OCI-LY7 (cell line): ENCODE measurements at regions of chr7 and their contacts with region 1.

Region 1: DNA sequence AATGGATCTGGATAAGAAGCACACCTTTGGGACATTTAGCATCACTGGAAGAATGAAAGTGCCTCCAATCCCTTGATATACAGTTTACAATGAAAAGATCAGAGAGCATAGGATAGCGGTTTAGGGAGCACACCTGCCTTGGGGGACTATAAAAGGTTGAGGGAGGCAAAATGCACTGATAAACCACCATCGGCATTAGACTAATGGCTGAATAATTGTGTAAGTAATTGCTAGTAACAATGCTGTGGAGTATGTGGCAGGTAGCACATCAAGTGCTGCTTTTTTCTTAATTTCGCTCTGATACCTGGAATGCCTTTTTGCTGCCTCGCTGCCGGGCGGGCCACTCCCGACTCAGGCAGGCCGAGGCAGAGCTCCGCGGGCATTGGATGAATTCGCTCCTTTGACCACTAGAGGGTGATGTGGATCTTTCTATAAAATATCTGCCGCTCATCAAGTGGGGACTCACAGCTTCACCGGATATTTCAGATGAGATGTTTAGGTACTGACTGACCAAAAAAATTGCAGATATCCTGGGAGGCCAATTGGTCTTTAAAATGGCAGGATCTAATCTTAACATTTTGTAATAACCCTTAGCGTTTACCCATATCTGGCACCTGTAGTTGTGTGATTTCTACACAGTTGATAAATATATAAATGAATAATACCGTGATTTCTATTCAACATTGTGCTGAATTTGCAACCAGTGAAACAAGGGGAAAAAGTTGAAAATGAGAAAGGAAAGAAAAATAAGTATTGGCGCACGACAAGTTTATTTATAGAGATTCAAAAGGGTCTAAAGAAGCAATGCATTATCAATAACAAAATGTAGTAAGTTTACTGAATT is 116.8 kb upstream of the PRSS1 start:
- DNase-seq: peak; percentile 82
- H3K4me3 ChIP-seq: no peak overlapping the region
- H3K27ac ChIP-seq: no peak overlapping the region
- H3K4me1 ChIP-seq: no peaks in the 10 kb centered on the region
- CTCF ChIP-seq: peak; percentile 90

Region 2: DNA sequence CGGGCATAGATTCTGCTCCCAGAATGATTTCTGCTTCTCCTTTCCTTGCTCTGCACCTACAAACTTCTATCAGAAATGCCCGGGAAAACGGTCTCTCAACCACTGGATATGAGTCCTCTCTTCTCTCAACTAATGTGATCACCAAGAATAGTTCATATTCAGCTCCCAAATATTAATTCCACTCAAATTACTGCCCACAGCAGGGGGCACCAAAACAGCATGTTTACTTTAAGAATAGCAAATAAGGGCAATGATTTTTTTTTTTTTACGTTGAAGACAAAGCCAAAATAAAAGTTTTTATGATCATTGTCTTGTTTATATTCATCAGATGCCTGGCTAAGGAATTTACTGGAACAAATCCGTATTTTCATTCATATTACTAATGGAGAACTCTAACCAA is 21.9 kb after region 1 on chr7:
- CTCF ChIA-PET with region 1: no interaction called
- POLR2A ChIA-PET with region 1: no interaction called
- intact Hi-C with region 1: no loop called
- DNase-seq: peak; percentile 17
- H3K4me3 ChIP-seq: no peak overlapping the region
- H3K27ac ChIP-seq: no peak overlapping the region
- H3K4me1 ChIP-seq: no peaks in the 10 kb centered on the region
- CTCF ChIP-seq: peak; percentile 75

Region 3: GRCh38 chr7:142669074-142669654 is 36.7 kb after region 1 on chr7:
- CTCF ChIA-PET with region 1: no interaction called
- POLR2A ChIA-PET with region 1: no interaction called
- intact Hi-C with region 1: loop called (anchors 1 kb)
- DNase-seq: peak; percentile 48
- H3K4me3 ChIP-seq: no peak overlapping the region
- H3K27ac ChIP-seq: no peak overlapping the region
- H3K4me1 ChIP-seq: peaks cover 41% of the 10 kb centered on the region
- CTCF ChIP-seq: peak; percentile 88

Region 4: DNA sequence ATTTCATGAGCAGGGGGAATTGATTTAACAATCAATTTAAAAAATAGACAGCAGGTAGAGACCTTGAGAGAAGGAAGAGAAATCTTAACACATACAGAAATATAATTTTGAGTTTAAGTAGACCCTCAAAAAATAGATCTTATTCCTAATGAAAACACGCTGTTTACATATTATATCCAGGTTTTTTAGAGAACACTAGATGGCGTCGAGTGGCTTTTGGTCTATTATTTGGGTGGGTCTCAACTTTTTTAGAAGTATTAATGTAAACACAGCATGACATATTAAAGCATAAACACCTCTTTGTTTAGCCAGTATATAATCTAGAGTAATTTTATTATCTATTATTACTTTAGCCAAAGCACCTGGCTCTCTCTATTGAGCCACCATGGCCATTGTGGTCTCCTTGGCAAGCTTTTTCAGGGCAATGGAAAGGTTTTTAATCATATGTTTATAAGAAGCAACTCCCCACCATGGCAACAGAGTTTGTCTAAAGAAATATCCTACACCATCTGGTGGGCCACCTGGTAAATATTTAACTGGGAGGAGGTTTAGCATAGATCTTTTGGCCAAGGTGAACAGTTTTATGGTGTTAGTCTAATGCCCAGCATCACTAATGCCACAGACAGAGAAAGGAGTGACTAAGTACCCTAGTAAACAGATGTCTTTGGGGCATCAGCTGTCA is 57.1 kb after region 1 on chr7:
- CTCF ChIA-PET with region 1: no interaction called
- POLR2A ChIA-PET with region 1: no interaction called
- intact Hi-C with region 1: loop called (anchors 5 kb)
- DNase-seq: peak; percentile 50
- H3K4me3 ChIP-seq: no peak overlapping the region
- H3K27ac ChIP-seq: no peak overlapping the region
- H3K4me1 ChIP-seq: peaks cover 7% of the 10 kb centered on the region
- CTCF ChIP-seq: peak; percentile 85

Region 5: DNA sequence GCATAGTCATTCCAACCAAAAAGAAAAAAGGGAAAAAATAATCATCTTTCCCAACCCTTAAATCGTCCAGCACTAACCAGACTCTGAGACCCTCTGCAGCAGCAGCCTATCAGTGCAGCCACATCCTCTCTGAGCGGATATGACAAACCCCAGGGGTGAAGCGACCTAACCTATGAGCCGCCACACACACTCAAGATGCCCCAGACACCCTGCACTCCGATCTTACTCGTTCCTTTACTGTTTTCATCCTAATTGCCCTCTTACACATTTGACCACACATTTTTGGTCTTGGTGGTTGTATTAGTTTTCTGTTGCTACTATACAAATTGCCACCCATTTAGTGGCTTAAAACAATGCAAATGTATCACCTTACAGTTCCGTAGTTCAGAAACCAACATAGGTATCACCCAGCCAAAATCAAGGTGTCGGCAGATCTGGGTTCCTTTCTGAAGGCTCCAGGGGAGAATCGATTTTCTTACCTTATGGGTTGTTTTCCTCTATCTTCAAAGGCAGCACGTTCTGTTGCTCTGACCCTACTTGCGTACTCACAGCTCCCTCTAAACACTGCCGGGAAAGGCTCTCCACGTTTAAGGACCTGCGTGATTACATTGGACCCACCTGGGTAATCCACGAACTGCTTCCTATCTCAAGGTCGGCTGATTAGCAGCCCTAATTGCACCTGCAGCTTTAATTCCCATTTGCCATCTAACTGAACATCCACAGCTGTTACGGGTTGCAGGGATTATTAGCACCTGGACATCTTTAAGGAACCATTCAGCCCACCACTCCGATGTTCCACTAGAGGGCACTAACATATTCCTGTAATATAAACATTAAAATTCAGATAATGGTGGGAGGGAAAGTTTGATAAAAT is 79.5 kb after region 1 on chr7:
- CTCF ChIA-PET with region 1: no interaction called
- POLR2A ChIA-PET with region 1: no interaction called
- intact Hi-C with region 1: loop called (anchors 2 kb)
- DNase-seq: peak; percentile 74
- H3K4me3 ChIP-seq: peak overlapping the region; percentile 58
- H3K27ac ChIP-seq: no peak overlapping the region
- H3K4me1 ChIP-seq: peaks cover 46% of the 10 kb centered on the region
- CTCF ChIP-seq: peak; percentile 98

Region 6: DNA sequence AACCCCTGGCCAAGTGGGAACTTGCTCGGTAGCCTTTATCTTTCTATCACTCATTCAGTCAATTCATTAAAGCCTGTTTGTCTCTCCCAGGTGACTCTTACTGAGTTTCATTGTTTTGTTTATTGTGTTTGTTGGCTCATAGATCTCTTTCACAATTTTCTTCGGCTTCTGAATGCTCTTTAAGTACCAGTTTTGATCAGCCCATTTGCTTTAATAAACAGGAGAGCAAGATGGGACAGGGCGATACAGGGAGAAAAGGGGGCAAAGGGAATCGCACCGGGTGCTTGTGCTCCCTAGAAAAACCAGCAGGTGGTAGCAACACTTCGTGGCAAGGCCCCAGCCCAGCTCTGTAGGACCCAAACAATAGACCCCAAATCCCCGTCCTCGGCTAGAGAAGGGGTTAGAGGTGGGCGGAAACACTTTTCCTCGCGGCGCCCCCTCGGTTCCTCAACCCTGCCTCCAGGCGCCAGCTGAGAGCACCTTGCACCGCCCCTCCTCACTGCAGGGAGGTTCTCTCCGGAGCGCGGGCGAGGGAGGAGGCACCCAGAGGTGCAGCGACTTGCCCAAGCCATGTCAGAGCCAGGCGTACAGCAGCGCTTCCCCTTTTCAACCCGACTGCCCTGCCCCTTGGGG is 221.3 kb after region 1 on chr7:
- CTCF ChIA-PET with region 1: no interaction called
- POLR2A ChIA-PET with region 1: no interaction called
- intact Hi-C with region 1: loop called (anchors 5 kb)
- DNase-seq: peak; percentile 80
- H3K4me3 ChIP-seq: peak overlapping the region; percentile 73
- H3K27ac ChIP-seq: no peak overlapping the region
- H3K4me1 ChIP-seq: peaks cover 6% of the 10 kb centered on the region
- CTCF ChIP-seq: peak; percentile 90

Region 7: GRCh38 chr7:143008007-143008901 is 375.7 kb after region 1 on chr7:
- CTCF ChIA-PET with region 1: no interaction called
- POLR2A ChIA-PET with region 1: no interaction called
- intact Hi-C with region 1: loop called (anchors 2 kb)
- DNase-seq: peak; percentile 77
- H3K4me3 ChIP-seq: no peak overlapping the region
- H3K27ac ChIP-seq: no peak overlapping the region
- H3K4me1 ChIP-seq: peaks cover 44% of the 10 kb centered on the region
- CTCF ChIP-seq: peak; percentile 99